ENCODE measurements at regions of chr5 and their contacts with region 1.

Region 1: DNA sequence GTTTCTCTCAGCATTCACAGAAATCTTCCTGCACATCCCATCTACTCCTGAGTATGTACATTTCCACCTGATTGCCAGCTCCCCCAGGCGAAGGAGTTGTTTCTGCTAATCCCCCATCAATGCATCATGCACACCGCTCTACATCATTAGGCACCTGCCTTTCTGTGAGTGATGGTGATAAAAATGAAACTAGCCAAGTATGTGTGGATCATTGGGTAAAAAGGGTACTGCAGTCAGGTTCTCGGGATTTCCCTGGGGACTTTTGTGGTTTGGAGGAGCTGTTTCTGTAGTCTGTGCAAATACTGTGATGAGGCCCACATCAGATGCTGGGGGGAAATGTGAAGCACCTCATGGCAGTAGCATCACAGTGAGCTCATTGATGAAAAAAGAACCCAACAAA is 30.4 kb downstream of the CAMK4 start:
- DNase-seq: peak in 6 of 9 donors; percentile 36 to 90 (median 52)
- ATAC-seq: peak; percentile 93
- H3K4me3 ChIP-seq: no peak overlapping the region
- H3K4me3 Mint-ChIP-seq: peak overlapping the region; percentile 46 to 80 (median 70)
- H3K27ac ChIP-seq: peak overlapping the region; percentile 76
- H3K27ac Mint-ChIP-seq: peak overlapping the region; percentile 65 to 95 (median 85)
- H3K4me1 ChIP-seq: peaks cover 36 to 73% of the 10 kb centered on the region in 2 donors
- H3K4me1 Mint-ChIP-seq: peaks cover 0 to 78% (median 48%) of the 10 kb centered on the region in 7 donors
- H3K27me3 ChIP-seq: no peaks in the 10 kb centered on the region
- H3K27me3 Mint-ChIP-seq: no peaks in the 10 kb centered on the region

Region 2: GRCh38 chr5:111237470-111237869 is 17.1 kb before region 1 on chr5:
- CTCF ChIA-PET with region 1: interaction called, 7 read pairs
- POLR2A ChIA-PET with region 1: interaction called, 21 read pairs
- intact Hi-C with region 1: loop called (anchors 1 kb)
- DNase-seq: peak in 1 of 9 donors; percentile 33
- ATAC-seq: no peak
- H3K4me3 ChIP-seq: peak overlapping the region; percentile 38
- H3K4me3 Mint-ChIP-seq: peak overlapping the region; percentile 72 to 93 (median 78)
- H3K27ac ChIP-seq: peak overlapping the region; percentile 93
- H3K27ac Mint-ChIP-seq: peak overlapping the region; percentile 86 to 99 (median 94)
- H3K4me1 ChIP-seq: peaks cover 66 to 93% of the 10 kb centered on the region in 2 donors
- H3K4me1 Mint-ChIP-seq: peaks cover 45 to 96% (median 94%) of the 10 kb centered on the region in 7 donors
- H3K27me3 ChIP-seq: no peaks in the 10 kb centered on the region
- H3K27me3 Mint-ChIP-seq: no peaks in the 10 kb centered on the region

Region 3: GRCh38 chr5:111242606-111243005 is 12.0 kb before region 1 on chr5:
- CTCF ChIA-PET with region 1: interaction called, 7 read pairs
- POLR2A ChIA-PET with region 1: interaction called, 21 read pairs
- intact Hi-C with region 1: loop called (anchors 1 kb)
- DNase-seq: no peak
- ATAC-seq: no peak
- H3K4me3 ChIP-seq: no peak overlapping the region
- H3K4me3 Mint-ChIP-seq: peak overlapping the region in 9 of 10 donors; percentile 17 to 81 (median 62)
- H3K27ac ChIP-seq: peak overlapping the region; percentile 50
- H3K27ac Mint-ChIP-seq: peak overlapping the region; percentile 38 to 98 (median 88)
- H3K4me1 ChIP-seq: peaks cover 15 to 69% of the 10 kb centered on the region in 2 donors
- H3K4me1 Mint-ChIP-seq: peaks cover 50 to 95% (median 90%) of the 10 kb centered on the region in 7 donors
- H3K27me3 ChIP-seq: no peaks in the 10 kb centered on the region
- H3K27me3 Mint-ChIP-seq: no peaks in the 10 kb centered on the region

Region 4: DNA sequence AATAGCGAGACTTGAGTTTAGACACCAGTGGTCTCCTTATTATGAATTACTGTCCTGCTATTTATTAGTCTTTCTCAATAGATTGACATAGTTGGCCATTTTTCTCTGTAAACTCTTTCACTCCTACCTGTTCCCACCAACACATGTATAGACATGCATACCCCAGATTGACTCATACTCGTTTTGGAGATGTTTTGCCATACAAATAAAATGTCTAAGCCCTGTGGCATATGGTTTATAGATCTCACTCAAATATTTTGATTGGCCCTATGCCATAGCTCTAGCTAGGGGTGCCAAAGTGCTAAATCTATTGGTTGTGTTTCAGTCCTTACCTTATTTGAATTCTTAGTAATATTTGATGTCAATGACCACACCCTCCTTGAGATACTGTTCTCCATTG is 11.9 kb after region 1 on chr5:
- CTCF ChIA-PET with region 1: no interaction called
- POLR2A ChIA-PET with region 1: interaction called, 4 read pairs
- intact Hi-C with region 1: loop called in 1 of 2 experiments (anchors 1 kb)
- DNase-seq: no peak
- ATAC-seq: no peak
- H3K4me3 ChIP-seq: no peak overlapping the region
- H3K4me3 Mint-ChIP-seq: peak overlapping the region in 2 of 10 donors; percentile 4 to 8
- H3K27ac ChIP-seq: no peak overlapping the region
- H3K27ac Mint-ChIP-seq: peak overlapping the region in 7 of 9 donors; percentile 37 to 67 (median 53)
- H3K4me1 ChIP-seq: peaks cover 0 to 28% of the 10 kb centered on the region in 2 donors
- H3K4me1 Mint-ChIP-seq: peaks cover 32 to 49% (median 39%) of the 10 kb centered on the region in 7 donors
- H3K27me3 ChIP-seq: no peaks in the 10 kb centered on the region
- H3K27me3 Mint-ChIP-seq: no peaks in the 10 kb centered on the region

Measured in naive thymus-derived CD4-positive, alpha-beta T cell (primary cell).